HEK293 (cell line): ENCODE measurements at regions of chr17 and their contacts with region 1.

Region 1: GRCh38 chr17:59331129-59331928 is at the start of gene YPEL2:
- H3K4me3 ChIP-seq: peak within 1 kb of the TSS; percentile 81
- H3K27ac ChIP-seq: peak within 1 kb of the TSS; percentile 78; the same call in 1 of the 2 replicates
- H3K4me1 ChIP-seq: peaks cover 25% of the 10 kb centered on the region
- CTCF ChIP-seq: no peak

Region 2: GRCh38 chr17:59244081-59244480 is 87.2 kb before region 1 on chr17:
- CTCF ChIA-PET with region 1: no interaction called
- POLR2A ChIA-PET with region 1: no interaction called
- H3K4me3 ChIP-seq: no peak overlapping the region
- H3K27ac ChIP-seq: no peak overlapping the region
- H3K4me1 ChIP-seq: no peaks in the 10 kb centered on the region
- CTCF ChIP-seq: no peak

Region 3: DNA sequence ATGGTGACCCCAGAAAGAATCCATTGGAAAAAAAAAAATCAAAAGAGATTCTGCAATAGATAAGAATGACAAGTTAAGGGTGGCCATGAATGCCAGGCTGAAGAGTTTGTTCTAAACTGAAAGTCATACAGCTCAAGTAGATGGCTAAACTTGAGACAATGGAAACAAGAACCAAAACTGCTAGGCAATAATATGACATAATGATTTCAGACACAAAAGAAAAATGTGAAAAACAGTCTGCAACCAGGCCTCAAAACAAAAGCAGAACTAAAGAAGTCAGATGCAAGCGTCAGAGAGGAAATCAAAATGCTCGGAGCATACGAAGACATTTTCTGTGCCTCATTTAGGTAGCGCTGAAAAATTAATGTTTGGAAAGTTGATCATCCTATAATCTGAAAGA is 54.3 kb before region 1 on chr17:
- CTCF ChIA-PET with region 1: no interaction called
- POLR2A ChIA-PET with region 1: no interaction called
- H3K4me3 ChIP-seq: no peak overlapping the region
- H3K27ac ChIP-seq: no peak overlapping the region
- H3K4me1 ChIP-seq: no peaks in the 10 kb centered on the region
- CTCF ChIP-seq: no peak

Region 4: DNA sequence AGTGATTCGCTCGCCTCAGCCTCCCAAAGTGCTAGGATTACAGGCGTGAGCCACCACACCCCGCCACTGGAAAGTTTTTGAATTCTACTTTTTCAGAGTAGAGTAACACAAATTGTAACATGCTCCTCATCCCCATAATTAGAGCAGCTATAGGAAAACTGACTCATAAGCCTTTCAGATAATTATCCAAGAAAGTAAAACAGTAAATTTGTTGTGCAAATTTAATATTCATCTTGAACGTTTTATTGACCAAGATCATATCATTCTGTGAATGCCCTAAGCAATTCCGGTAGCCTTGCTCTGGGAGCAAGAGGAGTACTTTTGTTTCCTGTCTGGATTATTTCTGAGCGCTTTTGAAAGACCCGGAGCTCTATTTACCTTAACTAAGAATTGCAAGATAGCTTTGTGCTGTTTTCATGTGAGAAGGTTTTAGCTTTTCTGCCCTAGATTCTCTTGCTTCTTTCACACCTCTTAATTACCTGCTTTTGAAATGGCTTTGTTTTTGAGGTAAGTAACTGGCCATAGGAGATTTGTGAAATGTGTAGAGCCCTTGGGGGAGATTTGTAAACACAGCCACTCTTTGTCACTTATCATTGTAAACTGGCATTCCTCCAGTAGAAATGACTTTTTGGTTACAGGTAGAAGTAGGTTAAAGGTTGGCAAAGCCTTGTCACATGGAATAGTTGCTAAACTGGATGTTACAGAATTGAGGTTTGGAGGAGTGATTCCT is 34.4 kb before region 1 on chr17:
- CTCF ChIA-PET with region 1: no interaction called
- POLR2A ChIA-PET with region 1: no interaction called
- H3K4me3 ChIP-seq: no peak overlapping the region
- H3K27ac ChIP-seq: no peak overlapping the region
- H3K4me1 ChIP-seq: 0 out of 2 replicates have a peak, but pooled peaks cover under 1% of the 10 kb centered on the region
- CTCF ChIP-seq: no peak

Region 5: DNA sequence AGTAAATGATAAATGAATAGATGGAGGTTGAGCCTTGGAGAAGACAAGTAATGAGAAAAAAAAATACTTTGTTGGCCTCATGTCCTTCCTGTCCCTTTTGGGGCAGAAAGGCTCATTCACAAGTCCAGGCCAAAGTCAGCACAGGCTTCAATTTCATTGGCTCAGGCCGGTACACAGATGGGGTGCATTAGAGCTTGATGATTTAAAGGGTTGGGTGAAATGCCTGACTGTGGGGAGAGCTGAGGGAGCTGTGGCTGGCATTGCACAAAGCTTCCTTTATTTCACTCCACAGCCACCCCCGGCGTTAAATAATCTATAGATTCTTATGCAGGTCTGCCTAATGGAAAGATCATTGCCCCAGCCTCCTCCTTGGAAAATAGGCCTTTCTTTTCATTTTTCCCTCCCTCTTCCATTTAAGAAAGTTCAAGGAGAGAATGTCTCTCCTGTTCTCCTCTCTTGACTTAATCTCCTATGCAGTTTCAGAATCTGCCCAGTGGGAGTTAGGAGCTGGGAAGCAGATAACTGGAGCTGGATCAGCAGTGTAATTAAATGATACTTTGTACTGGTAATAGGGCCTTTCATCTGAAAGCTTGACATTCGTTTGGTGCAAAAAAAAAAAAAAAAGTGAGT is 24.5 kb after region 1 on chr17:
- CTCF ChIA-PET with region 1: interaction called, 12 read pairs
- POLR2A ChIA-PET with region 1: no interaction called
- H3K4me3 ChIP-seq: no peak overlapping the region
- H3K27ac ChIP-seq: no peak overlapping the region
- H3K4me1 ChIP-seq: peaks cover 23% of the 10 kb centered on the region
- CTCF ChIP-seq: no peak

Region 6: DNA sequence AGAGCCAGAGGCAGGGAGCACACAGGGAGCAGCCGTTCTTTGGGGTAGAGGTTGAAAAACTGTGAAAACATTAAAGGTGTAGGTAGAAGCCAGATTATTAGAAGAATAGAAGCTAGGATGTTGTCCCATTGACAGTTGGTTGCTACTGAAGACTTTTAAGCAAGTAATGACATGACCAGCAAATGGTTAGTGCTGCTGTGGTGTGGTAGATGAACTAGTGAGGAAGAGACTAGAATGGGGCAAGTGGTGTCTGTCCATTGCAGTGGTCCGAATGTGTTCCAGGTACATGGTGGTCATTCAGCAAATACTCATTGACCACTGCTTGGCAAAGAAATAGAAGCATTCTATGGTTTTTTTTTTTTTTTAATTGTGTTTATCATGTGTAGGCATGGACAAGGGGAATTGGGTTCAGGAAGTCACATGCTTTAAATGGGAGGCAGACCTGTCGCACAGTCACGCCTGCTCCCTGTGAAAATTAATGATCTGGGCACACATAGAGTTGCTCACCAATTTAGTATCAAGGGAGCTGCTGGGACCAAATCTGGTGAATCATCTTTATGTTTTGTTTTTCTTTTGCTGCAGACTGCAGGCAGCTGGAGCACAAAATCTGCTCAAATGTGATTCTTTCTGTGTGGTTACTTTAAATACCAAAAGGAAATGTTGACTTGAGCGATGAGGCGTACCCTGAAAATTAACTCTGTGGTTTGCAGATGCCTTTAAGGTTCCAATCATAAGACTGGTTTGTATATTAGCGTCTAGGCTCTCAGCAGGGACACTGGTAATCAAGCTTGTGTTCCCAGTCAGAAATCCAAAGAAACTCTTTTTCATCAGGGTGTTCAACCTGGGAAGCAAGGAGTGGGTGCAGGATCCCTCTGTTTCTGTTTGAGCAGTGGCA is 30.8 kb after region 1 on chr17:
- CTCF ChIA-PET with region 1: interaction called, 15 read pairs
- POLR2A ChIA-PET with region 1: no interaction called
- H3K4me3 ChIP-seq: no peak overlapping the region
- H3K27ac ChIP-seq: peak overlapping the region; percentile 48
- H3K4me1 ChIP-seq: peaks cover 39% of the 10 kb centered on the region
- CTCF ChIP-seq: no peak

Region 7: DNA sequence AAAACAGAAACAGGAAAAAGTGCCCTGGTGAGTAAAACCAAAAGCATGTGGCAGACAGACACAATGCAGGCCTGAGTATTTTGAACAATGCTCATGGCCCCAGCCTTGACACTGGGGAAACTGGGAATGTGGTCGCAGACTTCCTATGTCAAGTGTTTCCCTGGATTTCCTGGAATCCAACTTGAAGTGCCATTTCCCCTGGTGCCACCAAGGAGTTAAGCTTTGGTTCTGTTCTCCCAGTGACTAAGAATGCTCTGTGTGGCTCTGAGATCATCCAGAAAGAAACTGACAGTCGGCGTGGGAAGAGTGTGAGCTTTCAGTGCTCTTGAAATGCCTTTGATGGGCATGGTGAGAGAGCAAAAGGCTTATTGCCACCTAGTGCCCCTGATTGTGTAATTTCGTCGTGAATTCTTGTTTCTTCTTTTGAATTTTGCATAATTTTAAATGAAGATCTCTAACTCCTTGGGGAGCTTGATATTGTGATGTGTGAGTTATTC is 96.1 kb after region 1 on chr17:
- CTCF ChIA-PET with region 1: interaction called, 24 read pairs
- POLR2A ChIA-PET with region 1: interaction called, 17 read pairs
- H3K4me3 ChIP-seq: no peak overlapping the region
- H3K27ac ChIP-seq: no peak overlapping the region
- H3K4me1 ChIP-seq: no peaks in the 10 kb centered on the region; the same call in 1 of the 2 replicates
- CTCF ChIP-seq: no peak

Region 8: GRCh38 chr17:59435238-59435637 is 103.9 kb after region 1 on chr17:
- CTCF ChIA-PET with region 1: interaction called, 151 read pairs
- POLR2A ChIA-PET with region 1: no interaction called
- H3K4me3 ChIP-seq: no peak overlapping the region
- H3K27ac ChIP-seq: no peak overlapping the region
- H3K4me1 ChIP-seq: peaks cover 9% of the 10 kb centered on the region
- CTCF ChIP-seq: no peak

Region 9: GRCh38 chr17:59440784-59441441 is 109.6 kb after region 1 on chr17:
- CTCF ChIA-PET with region 1: interaction called, 151 read pairs
- POLR2A ChIA-PET with region 1: interaction called, 3 read pairs
- H3K4me3 ChIP-seq: no peak overlapping the region
- H3K27ac ChIP-seq: no peak overlapping the region
- H3K4me1 ChIP-seq: peaks cover 5% of the 10 kb centered on the region; the same call in 1 of the 2 replicates
- CTCF ChIP-seq: peak; percentile 69